ENCODE measurements at regions of chr15 and their contacts with region 1.

Region 1: GRCh38 chr15:48861813-48862431 is 16.0 kb upstream of the EID1 start:
- DNase-seq: peak in 1 of 2 experiments; percentile 8
- H3K4me3 ChIP-seq: no peak overlapping the region
- H3K27ac ChIP-seq: no peak overlapping the region
- H3K4me1 ChIP-seq: peaks cover 7% of the 10 kb centered on the region; the same call in 1 of the 2 replicates
- H3K27me3 ChIP-seq: no peaks in the 10 kb centered on the region
- CTCF ChIP-seq: peak; percentile 91

Region 2: DNA sequence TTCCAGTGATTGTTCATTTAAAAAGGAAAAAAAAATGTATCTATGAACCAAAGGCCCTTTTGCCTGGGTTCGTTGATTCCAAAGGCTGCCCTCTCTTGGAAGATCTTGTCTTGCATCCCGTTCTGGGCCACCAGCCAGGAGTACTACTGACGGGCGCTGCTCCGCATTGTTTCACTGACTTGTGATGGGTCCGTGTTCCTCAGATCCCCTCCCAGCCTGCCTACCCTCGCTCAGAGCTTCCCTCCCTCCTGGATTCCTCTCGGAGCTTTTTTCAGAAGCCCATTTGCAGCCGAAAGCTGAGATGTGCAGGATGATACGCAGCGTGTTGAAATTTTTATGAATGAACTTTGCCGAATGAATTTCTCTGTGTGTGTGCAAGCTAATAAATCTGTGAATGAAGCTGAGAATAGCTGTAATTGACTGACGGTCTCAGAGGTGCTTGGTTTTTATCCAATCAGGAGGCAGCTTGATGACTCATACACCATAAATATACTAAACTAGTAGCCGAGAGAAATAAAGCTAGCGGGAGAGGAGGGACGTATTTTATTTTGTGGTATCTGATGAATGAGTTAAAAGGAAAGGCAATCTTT is 101.7 kb after region 1 on chr15 and contains the start of gene SHC4:
- CTCF ChIA-PET with region 1: no interaction called
- POLR2A ChIA-PET with region 1: no interaction called
- intact Hi-C with region 1: loop called (anchors 5 kb)
- DNase-seq: peak; percentile 24 to 59
- H3K4me3 ChIP-seq: peak within 1 kb of the TSS; percentile 70
- H3K27ac ChIP-seq: no peak within 1 kb of the TSS
- H3K4me1 ChIP-seq: 0 out of 2 replicates have a peak, but pooled peaks cover 8% of the 10 kb centered on the region
- H3K27me3 ChIP-seq: no peaks in the 10 kb centered on the region
- CTCF ChIP-seq: no peak; the same call in 1 of the 2 replicates
- total RNA-seq, gene SHC4: 0.18 and 0.44 TPM in 2 replicates

Region 3: GRCh38 chr15:49215768-49216739 is 354.1 kb after region 1 on chr15:
- CTCF ChIA-PET with region 1: no interaction called
- POLR2A ChIA-PET with region 1: no interaction called
- intact Hi-C with region 1: loop called (anchors 1 kb)
- DNase-seq: peak in 1 of 2 experiments; percentile 12
- H3K4me3 ChIP-seq: no peak overlapping the region
- H3K27ac ChIP-seq: no peak overlapping the region
- H3K4me1 ChIP-seq: no peaks in the 10 kb centered on the region
- H3K27me3 ChIP-seq: no peaks in the 10 kb centered on the region
- CTCF ChIP-seq: no peak

Region 4: GRCh38 chr15:49421991-49422390 is 560.1 kb after region 1 on chr15:
- CTCF ChIA-PET with region 1: interaction called, 3 read pairs
- POLR2A ChIA-PET with region 1: no interaction called
- intact Hi-C with region 1: loop called (anchors 1 kb)
- DNase-seq: peak in 1 of 2 experiments; percentile 22
- H3K4me3 ChIP-seq: no peak overlapping the region
- H3K27ac ChIP-seq: no peak overlapping the region
- H3K4me1 ChIP-seq: no peaks in the 10 kb centered on the region
- H3K27me3 ChIP-seq: no peaks in the 10 kb centered on the region
- CTCF ChIP-seq: peak; percentile 81

Region 5: GRCh38 chr15:50145451-50145872 is 1283.5 kb after region 1 on chr15:
- CTCF ChIA-PET with region 1: interaction called, 6 read pairs
- POLR2A ChIA-PET with region 1: no interaction called
- intact Hi-C with region 1: loop called (anchors 5 kb)
- DNase-seq: peak in 1 of 2 experiments; percentile 60
- H3K4me3 ChIP-seq: no peak overlapping the region
- H3K27ac ChIP-seq: no peak overlapping the region
- H3K4me1 ChIP-seq: peaks cover 26% of the 10 kb centered on the region
- H3K27me3 ChIP-seq: no peaks in the 10 kb centered on the region
- CTCF ChIP-seq: peak; percentile 70